PC-3 (cell line): ENCODE measurements at regions of chr9 and their contacts with region 1.

Region 1: DNA sequence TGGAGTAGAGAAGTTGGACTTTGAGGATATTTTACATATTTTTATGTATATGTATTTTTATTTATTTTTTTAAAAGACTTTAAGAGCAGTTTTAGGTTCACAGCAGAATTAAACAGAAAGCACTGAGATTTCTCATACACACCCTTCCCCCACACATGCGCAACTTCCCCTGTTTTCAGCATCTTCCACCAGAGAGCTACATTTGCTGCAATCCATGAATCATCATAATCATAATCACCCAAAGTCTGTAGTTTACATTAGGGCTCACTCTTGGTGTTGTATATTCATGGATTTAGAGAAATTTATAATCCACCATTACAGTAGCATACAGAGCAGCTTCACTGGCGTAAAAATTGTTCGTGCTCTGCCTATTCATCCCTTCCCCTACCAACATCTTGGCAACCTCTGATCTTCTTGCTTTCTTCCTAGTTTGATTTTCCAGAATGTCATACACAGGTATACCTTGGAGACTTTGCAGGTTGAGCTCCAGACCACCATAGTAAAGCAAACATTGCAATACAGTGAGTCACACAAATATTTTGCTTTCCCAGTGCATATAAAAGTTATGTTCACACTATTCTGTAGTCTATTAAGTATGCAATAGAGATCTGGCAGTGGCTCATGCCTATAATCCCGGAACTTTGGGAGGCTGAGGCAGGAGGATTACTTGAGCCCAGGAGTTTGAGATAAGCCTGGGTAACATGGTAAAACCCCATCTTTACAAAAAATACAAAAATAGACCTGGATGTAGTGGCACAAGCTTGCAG is 9.6 kb upstream of the CCDC171 start:
- DNase-seq: peak; percentile 82
- ATAC-seq: peak; percentile 97
- H3K4me3 ChIP-seq: peak overlapping the region; percentile 53; the same call in 1 of the 2 replicates
- H3K27ac ChIP-seq: peak overlapping the region; percentile 64
- H3K4me1 ChIP-seq: peaks cover 13% of the 10 kb centered on the region
- H3K27me3 ChIP-seq: no peaks in the 10 kb centered on the region
- CTCF ChIP-seq: no peak

Region 2: GRCh38 chr9:14935106-14935751 is 608.0 kb before region 1 on chr9:
- CTCF ChIA-PET with region 1: no interaction called
- POLR2A ChIA-PET with region 1: no interaction called
- intact Hi-C with region 1: no loop called
- DNase-seq: no peak
- ATAC-seq: no peak
- H3K4me3 ChIP-seq: no peak overlapping the region
- H3K27ac ChIP-seq: no peak overlapping the region
- H3K4me1 ChIP-seq: no peaks in the 10 kb centered on the region
- H3K27me3 ChIP-seq: no peaks in the 10 kb centered on the region
- CTCF ChIP-seq: no peak

Region 3: DNA sequence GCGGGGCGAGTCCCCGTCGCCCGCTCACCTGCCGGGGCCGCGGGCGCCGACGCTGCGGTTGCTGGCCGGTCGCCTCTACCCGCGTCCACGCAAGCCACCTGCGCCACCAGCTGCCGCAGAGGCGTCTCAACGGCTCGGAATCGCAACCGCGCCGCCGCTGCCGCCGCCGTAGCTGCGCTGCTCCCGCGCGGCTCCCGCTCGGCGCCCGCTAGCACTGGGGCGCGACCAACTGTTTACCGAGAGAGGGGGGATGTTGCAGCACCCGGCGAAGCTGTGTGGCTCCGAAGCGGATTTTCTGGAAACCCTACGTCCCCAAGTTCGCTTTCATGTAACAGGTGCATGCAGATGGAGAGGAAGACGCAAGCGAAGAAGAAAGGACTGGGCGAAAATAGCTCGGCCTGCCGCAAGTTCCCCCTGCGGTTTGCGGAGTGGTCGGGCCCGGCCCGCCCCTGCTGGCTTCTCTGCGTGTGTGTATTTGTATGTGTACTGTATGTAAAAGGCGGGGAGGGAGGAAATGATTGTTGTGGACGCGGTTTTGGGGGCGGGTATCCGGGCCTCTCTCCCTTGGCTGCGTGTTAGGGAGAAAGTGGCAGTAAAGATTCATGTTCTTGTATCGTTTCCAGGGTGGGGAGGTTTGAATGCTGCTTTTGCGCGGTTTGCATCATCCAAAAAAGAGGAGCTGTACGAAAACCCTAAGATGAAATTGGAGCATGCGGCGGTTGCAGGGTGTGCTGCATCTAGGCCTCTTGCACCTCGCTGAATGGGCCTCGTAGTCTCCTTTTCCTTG is 32.2 kb before region 1 on chr9 and contains the start of gene PSIP1:
- CTCF ChIA-PET with region 1: interaction called, 3 read pairs
- POLR2A ChIA-PET with region 1: interaction called, 3 read pairs
- intact Hi-C with region 1: loop called (anchors 2 kb)
- DNase-seq: peak; percentile 65
- ATAC-seq: peak; percentile 79
- H3K4me3 ChIP-seq: peak within 1 kb of the TSS; percentile 83
- H3K27ac ChIP-seq: peak within 1 kb of the TSS; percentile 81
- H3K4me1 ChIP-seq: peaks cover 28% of the 10 kb centered on the region
- H3K27me3 ChIP-seq: no peaks in the 10 kb centered on the region
- CTCF ChIP-seq: no peak
- total RNA-seq, gene PSIP1: 33.2 and 42.9 TPM in 2 replicates

Region 4: GRCh38 chr9:15578714-15579113 is 35.5 kb after region 1 on chr9:
- CTCF ChIA-PET with region 1: no interaction called
- POLR2A ChIA-PET with region 1: no interaction called
- intact Hi-C with region 1: no loop called
- DNase-seq: no peak
- ATAC-seq: no peak
- H3K4me3 ChIP-seq: no peak overlapping the region
- H3K27ac ChIP-seq: no peak overlapping the region
- H3K4me1 ChIP-seq: no peaks in the 10 kb centered on the region
- H3K27me3 ChIP-seq: no peaks in the 10 kb centered on the region
- CTCF ChIP-seq: no peak

Region 5: GRCh38 chr9:15942831-15943424 is 399.7 kb after region 1 on chr9:
- CTCF ChIA-PET with region 1: no interaction called
- POLR2A ChIA-PET with region 1: no interaction called
- intact Hi-C with region 1: no loop called
- DNase-seq: no peak
- ATAC-seq: no peak
- H3K4me3 ChIP-seq: no peak overlapping the region
- H3K27ac ChIP-seq: no peak overlapping the region
- H3K4me1 ChIP-seq: peaks cover 7% of the 10 kb centered on the region; the same call in 1 of the 2 replicates
- H3K27me3 ChIP-seq: no peaks in the 10 kb centered on the region
- CTCF ChIP-seq: no peak